ENCODE measurements at regions of chr5 and their contacts with region 1.

Region 1: GRCh38 chr5:151115274-151115905 is 34.6 kb upstream of the TNIP1 start:
- DNase-seq: peak; percentile 90
- H3K4me3 Mint-ChIP-seq: no peak overlapping the region
- H3K27ac Mint-ChIP-seq: no peak overlapping the region
- H3K4me1 Mint-ChIP-seq: peaks cover 9% of the 10 kb centered on the region
- H3K27me3 Mint-ChIP-seq: no peaks in the 10 kb centered on the region
- CTCF ChIP-seq: peak; percentile 98

Region 2: DNA sequence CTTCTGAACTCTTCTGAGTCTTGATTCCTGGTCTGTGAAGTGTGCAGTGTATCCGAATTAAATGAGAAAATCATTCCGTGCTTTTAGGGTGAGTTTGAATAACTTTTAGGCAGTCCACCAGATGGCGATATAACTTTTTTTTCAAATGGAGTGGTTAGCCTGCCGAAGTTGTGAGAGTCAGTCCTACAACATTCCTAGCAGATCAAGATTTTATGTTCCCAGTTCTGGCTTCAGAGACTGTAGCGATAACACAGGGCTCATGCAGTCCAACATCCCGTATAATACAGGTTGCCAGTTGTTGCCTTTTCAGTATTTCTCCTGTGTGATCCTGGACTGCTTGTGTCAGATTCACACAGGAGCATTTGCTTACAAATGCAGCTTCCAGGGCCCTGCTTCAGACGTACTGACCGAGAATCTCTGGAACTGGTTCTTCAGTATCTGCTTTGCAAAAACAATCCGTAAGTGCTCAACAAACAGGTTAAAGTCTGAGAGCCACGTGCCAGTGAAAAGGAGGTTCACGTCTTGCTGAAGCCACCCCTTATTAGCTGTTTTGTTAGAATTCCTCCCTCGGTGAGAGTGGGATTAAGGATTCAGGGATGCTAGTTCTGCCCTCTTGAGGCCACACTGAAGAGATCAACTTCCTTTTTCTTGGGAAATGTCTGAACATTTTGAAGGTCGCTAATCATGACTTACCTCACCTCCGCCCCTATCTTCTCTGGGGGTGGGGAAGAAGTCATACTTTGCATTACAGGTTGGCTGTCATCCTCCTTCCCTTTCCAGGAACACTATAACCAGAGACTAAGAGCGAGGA is 314.1 kb before region 1 on chr5:
- CTCF ChIA-PET with region 1: no interaction called
- intact Hi-C with region 1: loop called (anchors 1 kb)
- DNase-seq: peak; percentile 65
- H3K4me3 Mint-ChIP-seq: peak overlapping the region; percentile 63
- H3K27ac Mint-ChIP-seq: peak overlapping the region; percentile 2
- H3K4me1 Mint-ChIP-seq: no peaks in the 10 kb centered on the region
- H3K27me3 Mint-ChIP-seq: peaks cover 23% of the 10 kb centered on the region
- CTCF ChIP-seq: peak; percentile 60

Region 3: DNA sequence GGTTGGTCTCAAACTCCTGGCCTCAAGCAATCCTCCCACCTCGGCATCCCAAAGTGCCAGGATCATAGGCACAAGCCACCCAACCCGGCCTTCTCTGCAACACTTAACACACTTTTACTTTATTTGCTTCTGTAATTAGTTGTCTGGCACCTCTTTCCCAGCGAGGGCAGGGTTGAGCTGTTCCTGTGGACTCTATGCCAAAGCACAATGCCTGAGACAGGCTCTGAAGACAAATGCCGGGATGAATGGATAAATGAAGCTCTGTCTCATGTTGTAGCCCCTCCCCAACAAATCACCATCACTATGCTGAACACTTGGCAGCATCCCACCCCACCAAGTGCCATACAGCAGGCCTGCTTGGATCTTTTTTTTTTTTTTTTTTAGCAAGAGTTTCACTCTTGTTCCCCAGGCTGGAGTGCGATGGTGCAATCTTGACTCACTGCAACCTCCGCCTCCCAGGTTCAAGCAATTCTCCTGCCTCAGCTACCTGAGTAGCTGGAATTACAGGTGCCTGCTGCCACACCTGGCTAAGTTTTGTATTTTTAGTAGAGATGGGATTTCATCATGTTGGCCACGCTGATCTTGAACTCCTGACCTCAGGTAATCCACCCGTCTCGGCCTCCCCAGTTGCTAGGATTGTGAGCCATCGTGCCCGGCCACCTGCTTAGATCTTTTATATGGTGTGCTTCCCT is 73.7 kb before region 1 on chr5:
- CTCF ChIA-PET with region 1: interaction called, 140 read pairs
- intact Hi-C with region 1: no loop called
- DNase-seq: no peak
- H3K4me3 Mint-ChIP-seq: no peak overlapping the region
- H3K27ac Mint-ChIP-seq: no peak overlapping the region
- H3K4me1 Mint-ChIP-seq: peaks cover 14% of the 10 kb centered on the region
- H3K27me3 Mint-ChIP-seq: no peaks in the 10 kb centered on the region
- CTCF ChIP-seq: no peak

Region 4: GRCh38 chr5:151075698-151076331 is 39.6 kb before region 1 on chr5:
- CTCF ChIA-PET with region 1: interaction called, 13 read pairs
- intact Hi-C with region 1: no loop called
- DNase-seq: peak; percentile 82
- H3K4me3 Mint-ChIP-seq: peak overlapping the region; percentile 75
- H3K27ac Mint-ChIP-seq: peak overlapping the region; percentile 73
- H3K4me1 Mint-ChIP-seq: peaks cover 92% of the 10 kb centered on the region
- H3K27me3 Mint-ChIP-seq: no peaks in the 10 kb centered on the region
- CTCF ChIP-seq: no peak

Region 5: GRCh38 chr5:151086905-151087360 is 28.5 kb before region 1 on chr5:
- CTCF ChIA-PET with region 1: interaction called, 13 read pairs
- intact Hi-C with region 1: loop called (anchors 2 kb)
- DNase-seq: peak; percentile 76
- H3K4me3 Mint-ChIP-seq: peak overlapping the region; percentile 75
- H3K27ac Mint-ChIP-seq: peak overlapping the region; percentile 85
- H3K4me1 Mint-ChIP-seq: peaks cover 73% of the 10 kb centered on the region
- H3K27me3 Mint-ChIP-seq: no peaks in the 10 kb centered on the region
- CTCF ChIP-seq: no peak